Endothelial cell of umbilical vein (primary cell): ENCODE measurements at regions of chrX and their contacts with region 1.

Region 1: GRCh38 chrX:108070891-108071290 is 20.5 kb downstream of the PSMD10 start:
- DNase-seq: peak; percentile 29
- H3K4me3 ChIP-seq: no peak overlapping the region
- H3K27ac ChIP-seq: peak overlapping the region; percentile 17
- H3K4me1 ChIP-seq: peaks cover 19% of the 10 kb centered on the region
- H3K27me3 ChIP-seq: no peaks in the 10 kb centered on the region
- CTCF ChIP-seq: no peak
- POLR2A ChIP-seq: no peak

Region 2: DNA sequence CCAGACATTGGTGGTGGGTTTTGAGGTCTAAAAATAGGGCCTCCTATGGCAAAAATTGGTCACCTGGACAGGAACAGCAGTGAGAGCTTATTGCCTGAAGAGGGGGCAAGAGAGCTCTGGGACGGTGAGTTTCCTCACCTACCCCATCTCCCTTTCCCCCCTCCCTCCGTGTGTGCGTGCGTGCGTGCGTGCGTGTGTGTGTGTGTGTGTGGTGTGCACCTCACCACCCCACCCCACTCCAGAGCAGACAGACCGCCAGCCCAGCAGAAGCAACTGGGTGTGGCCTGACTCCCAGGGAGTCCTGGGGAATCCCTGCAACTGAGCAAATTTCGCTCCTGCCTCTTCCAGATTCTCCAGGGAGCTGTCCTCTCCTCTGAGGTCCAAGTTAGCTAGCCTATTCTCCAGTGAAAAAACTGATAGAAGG is 397.9 kb before region 1 on chrX:
- CTCF ChIA-PET with region 1: no interaction called
- POLR2A ChIA-PET with region 1: no interaction called
- dilution Hi-C with region 1: no loop called
- intact Hi-C with region 1: loop called (anchors 1 kb)
- DNase-seq: peak; percentile 60
- H3K4me3 ChIP-seq: no peak overlapping the region
- H3K27ac ChIP-seq: peak overlapping the region; percentile 74
- H3K4me1 ChIP-seq: peaks cover 25% of the 10 kb centered on the region
- H3K27me3 ChIP-seq: no peaks in the 10 kb centered on the region
- CTCF ChIP-seq: peak; percentile 60 to 72
- POLR2A ChIP-seq: no peak

Region 3: GRCh38 chrX:107894038-107894437 is 176.9 kb before region 1 on chrX:
- CTCF ChIA-PET with region 1: no interaction called
- POLR2A ChIA-PET with region 1: no interaction called
- dilution Hi-C with region 1: no loop called
- intact Hi-C with region 1: loop called (anchors 2 kb)
- DNase-seq: peak; percentile 47
- H3K4me3 ChIP-seq: no peak overlapping the region
- H3K27ac ChIP-seq: no peak overlapping the region
- H3K4me1 ChIP-seq: no peaks in the 10 kb centered on the region
- H3K27me3 ChIP-seq: no peaks in the 10 kb centered on the region
- CTCF ChIP-seq: peak in 1 of 2 donors; percentile 15
- POLR2A ChIP-seq: no peak

Region 4: GRCh38 chrX:107905366-107905765 is 165.5 kb before region 1 on chrX:
- CTCF ChIA-PET with region 1: no interaction called
- POLR2A ChIA-PET with region 1: no interaction called
- dilution Hi-C with region 1: no loop called
- intact Hi-C with region 1: no loop called
- DNase-seq: no peak
- H3K4me3 ChIP-seq: no peak overlapping the region
- H3K27ac ChIP-seq: no peak overlapping the region
- H3K4me1 ChIP-seq: no peaks in the 10 kb centered on the region
- H3K27me3 ChIP-seq: no peaks in the 10 kb centered on the region
- CTCF ChIP-seq: no peak
- POLR2A ChIP-seq: no peak

Region 5: GRCh38 chrX:108001174-108001814 is 69.6 kb before region 1 on chrX:
- CTCF ChIA-PET with region 1: interaction called, 9 read pairs
- POLR2A ChIA-PET with region 1: no interaction called
- dilution Hi-C with region 1: no loop called
- intact Hi-C with region 1: loop called (anchors 1 kb)
- DNase-seq: peak; percentile 34
- H3K4me3 ChIP-seq: no peak overlapping the region
- H3K27ac ChIP-seq: no peak overlapping the region
- H3K4me1 ChIP-seq: no peaks in the 10 kb centered on the region
- H3K27me3 ChIP-seq: peaks cover 0 to 7% of the 10 kb centered on the region in 2 experiments
- CTCF ChIP-seq: peak; percentile 35 to 58
- POLR2A ChIP-seq: no peak

Region 6: GRCh38 chrX:108036298-108036973 is 34.5 kb before region 1 on chrX:
- CTCF ChIA-PET with region 1: no interaction called
- POLR2A ChIA-PET with region 1: no interaction called
- dilution Hi-C with region 1: no loop called
- intact Hi-C with region 1: loop called (anchors 1 kb)
- DNase-seq: peak; percentile 88
- H3K4me3 ChIP-seq: no peak overlapping the region
- H3K27ac ChIP-seq: peak overlapping the region; percentile 94
- H3K4me1 ChIP-seq: peaks cover 14% of the 10 kb centered on the region
- H3K27me3 ChIP-seq: no peaks in the 10 kb centered on the region
- CTCF ChIP-seq: no peak
- POLR2A ChIP-seq: no peak

Region 7: DNA sequence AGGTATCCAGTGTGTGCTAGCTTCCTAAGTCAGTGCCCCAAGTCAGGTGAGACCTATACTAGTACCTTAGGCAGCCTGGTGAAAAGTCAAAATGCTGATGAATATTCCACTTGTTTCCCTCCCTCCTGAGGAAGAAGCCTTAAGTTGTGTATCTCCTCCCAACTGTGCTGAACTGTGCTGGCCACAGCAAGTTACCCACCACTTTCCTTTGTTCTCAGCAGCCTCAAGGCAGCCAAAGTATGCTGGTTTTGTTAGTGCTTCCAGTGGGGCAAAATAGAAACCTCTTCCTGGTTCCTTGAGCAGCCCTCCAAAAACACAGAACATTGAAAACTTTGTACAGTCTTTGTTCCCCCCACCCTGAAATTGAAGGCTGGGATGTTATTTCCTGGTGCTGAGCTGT is 34.6 kb after region 1 on chrX:
- CTCF ChIA-PET with region 1: no interaction called
- POLR2A ChIA-PET with region 1: no interaction called
- dilution Hi-C with region 1: no loop called
- intact Hi-C with region 1: no loop called
- DNase-seq: no peak
- H3K4me3 ChIP-seq: no peak overlapping the region
- H3K27ac ChIP-seq: no peak overlapping the region
- H3K4me1 ChIP-seq: peaks cover 5% of the 10 kb centered on the region
- H3K27me3 ChIP-seq: no peaks in the 10 kb centered on the region
- CTCF ChIP-seq: no peak
- POLR2A ChIP-seq: no peak

Region 8: GRCh38 chrX:108138814-108139702 is 68.2 kb after region 1 on chrX:
- CTCF ChIA-PET with region 1: interaction called, 32 read pairs
- POLR2A ChIA-PET with region 1: no interaction called
- dilution Hi-C with region 1: no loop called
- intact Hi-C with region 1: loop called (anchors 1 kb)
- DNase-seq: no peak
- H3K4me3 ChIP-seq: no peak overlapping the region
- H3K27ac ChIP-seq: no peak overlapping the region
- H3K4me1 ChIP-seq: no peaks in the 10 kb centered on the region
- H3K27me3 ChIP-seq: no peaks in the 10 kb centered on the region
- CTCF ChIP-seq: peak; percentile 47 to 48
- POLR2A ChIP-seq: no peak

Region 9: DNA sequence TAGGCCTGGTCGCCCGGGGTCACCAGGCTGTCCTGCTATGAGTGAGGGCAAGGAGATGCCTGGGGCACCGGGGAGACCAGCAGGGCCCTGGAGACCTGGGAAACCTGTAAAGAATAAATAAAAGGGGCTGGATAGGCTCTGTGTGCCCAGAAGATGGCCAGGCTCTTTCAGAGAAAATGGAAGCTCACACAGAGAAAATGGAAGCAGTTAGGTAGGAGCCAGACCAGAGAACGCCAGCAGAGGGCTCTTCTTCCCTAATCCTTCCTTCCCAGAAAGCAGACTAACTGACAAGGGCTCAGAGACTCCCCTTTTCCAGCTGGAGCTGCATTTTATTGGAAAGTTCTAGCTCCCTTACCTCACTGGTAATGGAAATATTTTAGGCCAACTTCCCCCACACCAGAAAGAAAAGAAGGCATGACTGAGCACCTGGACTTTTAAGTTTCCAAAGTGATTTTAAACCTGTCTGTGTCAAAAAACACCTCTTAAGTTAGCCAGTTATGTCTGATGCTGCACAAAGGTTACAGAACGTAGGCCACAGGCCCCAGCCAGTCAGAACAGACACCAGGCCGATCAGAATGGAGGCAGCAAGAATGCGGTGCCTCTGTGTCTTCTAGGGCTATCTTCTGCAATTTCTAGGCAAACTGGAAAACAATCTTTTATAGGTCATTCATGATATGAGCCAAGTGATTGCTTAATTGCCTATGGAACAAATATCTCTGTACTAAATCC is 94.7 kb after region 1 on chrX:
- CTCF ChIA-PET with region 1: no interaction called
- POLR2A ChIA-PET with region 1: no interaction called
- dilution Hi-C with region 1: no loop called
- intact Hi-C with region 1: no loop called
- DNase-seq: peak; percentile 12
- H3K4me3 ChIP-seq: no peak overlapping the region
- H3K27ac ChIP-seq: no peak overlapping the region
- H3K4me1 ChIP-seq: peaks cover 7% of the 10 kb centered on the region
- H3K27me3 ChIP-seq: no peaks in the 10 kb centered on the region
- CTCF ChIP-seq: peak; percentile 13 to 41
- POLR2A ChIP-seq: no peak